Head of caudate nucleus (tissue), 42 donors: ENCODE measurements at regions of chr9 and their contacts with region 1.

Region 1: DNA sequence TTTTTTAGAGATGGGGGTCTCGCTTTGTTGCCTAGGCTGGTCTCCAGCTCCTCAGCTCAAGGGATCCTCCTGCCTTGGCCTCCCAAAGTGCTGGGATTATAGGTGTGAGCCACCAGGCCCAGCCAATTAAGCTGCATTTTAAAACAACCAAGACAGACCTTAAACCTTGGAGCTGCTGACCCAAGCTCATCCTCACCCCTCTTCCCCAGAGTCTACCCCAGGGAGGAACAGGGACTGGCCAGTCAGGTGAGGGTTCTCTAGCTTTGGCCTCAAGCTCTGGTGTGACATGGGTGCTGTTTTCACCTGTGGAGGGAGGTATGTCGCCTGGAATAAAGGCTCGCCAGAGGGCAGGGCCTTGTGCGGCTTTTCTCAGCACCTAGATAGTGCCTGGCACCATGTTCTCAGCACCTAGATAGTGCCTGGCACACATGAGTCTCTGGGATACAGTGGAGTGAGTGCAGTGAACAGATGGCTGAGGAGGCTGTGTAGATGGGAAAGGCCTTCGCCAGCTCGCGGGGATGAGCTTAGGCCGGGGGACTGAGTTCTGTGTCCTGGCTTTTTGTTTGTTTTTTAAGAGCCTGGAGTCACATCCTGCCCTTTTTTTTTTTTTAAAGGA is 7.4 kb downstream of the CDK9 start:
- DNase-seq: no peak

Region 2: GRCh38 chr9:127869310-127870152 is 76.3 kb after region 1 on chr9:
- intact Hi-C with region 1: loop called (anchors 5 kb)
- DNase-seq: peak; percentile 54 to 92 (median 82)